Activated CD4-positive, alpha-beta memory T cell treated with anti-CD3 and anti-CD28 coated beads for 36 hours (primary cell): ENCODE measurements at regions of chr14 and their contacts with region 1.

Region 1: DNA sequence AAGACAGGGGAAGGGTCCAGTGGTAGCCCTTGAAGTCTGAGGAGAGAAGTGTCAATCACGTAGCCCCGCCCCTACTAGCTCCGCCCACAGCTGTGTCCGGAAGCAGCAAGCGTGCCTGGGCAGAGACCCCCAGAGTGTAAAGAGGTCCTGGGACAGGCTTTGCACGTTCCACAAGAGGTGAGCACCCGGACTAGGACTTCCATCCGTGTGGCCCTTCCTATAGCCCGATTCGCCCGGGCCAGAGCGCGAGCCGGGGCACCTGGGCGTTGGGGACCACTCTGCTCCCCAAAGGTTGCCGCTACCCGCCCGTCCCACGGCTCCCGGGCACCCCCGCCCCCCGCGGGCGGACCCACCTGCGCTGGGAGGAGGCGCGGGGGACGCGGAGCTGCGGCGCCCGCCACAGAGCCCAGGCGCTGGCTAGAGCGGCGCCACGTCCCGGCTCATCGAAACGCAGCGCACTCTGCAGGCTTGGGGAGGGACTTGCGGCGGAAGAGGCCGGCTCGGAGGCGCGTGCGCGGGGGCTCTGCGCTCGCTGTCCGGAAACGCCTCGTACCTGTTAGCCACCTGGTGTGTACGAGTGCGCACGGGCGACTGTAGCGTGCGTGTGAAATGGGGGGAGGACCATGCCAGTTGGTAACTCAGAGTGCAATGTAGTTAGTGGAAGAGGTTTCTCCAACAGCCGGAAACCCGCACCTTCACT is at the start of gene RABGGTA:
- DNase-seq: peak; percentile 93
- H3K4me3 Mint-ChIP-seq: peak within 1 kb of the TSS; percentile 84
- H3K27ac Mint-ChIP-seq: peak within 1 kb of the TSS; percentile 94
- H3K4me1 Mint-ChIP-seq: peaks cover 42% of the 10 kb centered on the region
- H3K27me3 Mint-ChIP-seq: no peaks in the 10 kb centered on the region
- total RNA-seq, gene RABGGTA: 39.5 to 40.6 TPM

Region 2: DNA sequence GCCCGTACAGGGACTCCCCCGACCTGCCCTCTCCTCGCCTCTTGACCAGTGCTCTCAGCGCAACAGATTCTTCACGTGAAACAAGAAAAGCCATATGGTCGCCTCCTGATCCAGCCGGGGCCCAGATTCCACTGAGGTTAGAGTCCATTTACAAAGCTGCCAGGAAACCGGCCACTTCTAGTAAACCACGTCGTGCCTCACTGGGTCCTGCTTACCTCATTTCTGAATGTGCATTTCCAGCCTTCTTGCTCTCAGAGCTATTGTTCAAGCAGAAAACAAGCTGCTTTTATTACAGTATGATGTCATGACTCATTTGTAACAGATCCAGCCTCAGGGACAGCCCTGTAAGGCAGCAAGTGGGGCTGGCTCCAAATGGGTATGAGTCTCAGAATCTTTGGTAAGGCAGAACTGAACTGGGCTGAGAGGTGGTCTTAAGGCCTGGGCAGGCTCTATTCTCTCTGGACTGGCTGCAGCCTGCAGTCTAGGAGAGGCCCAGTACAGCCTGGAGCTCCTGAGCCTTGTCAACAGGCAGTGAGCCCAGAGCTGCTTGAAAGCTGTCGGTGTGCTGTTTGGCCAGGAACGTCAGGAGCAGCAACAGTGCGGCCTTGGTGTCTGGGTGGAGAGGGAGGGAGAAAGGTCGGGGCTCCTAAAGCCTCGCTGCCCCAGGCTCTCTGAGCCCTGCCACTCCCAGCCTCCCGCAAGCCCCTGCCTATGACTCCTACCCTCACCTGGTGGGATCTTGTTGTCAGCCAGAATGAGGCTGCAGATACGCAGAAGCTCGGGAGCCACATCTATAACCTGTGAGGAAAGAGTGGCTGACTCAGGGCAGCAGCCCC is 91.1 kb before region 1 on chr14:
- CTCF ChIA-PET with region 1: no interaction called
- POLR2A ChIA-PET with region 1: no interaction called
- intact Hi-C with region 1: no loop called
- DNase-seq: no peak
- H3K4me3 Mint-ChIP-seq: no peak overlapping the region
- H3K27ac Mint-ChIP-seq: no peak overlapping the region
- H3K4me1 Mint-ChIP-seq: peaks cover 1% of the 10 kb centered on the region
- H3K27me3 Mint-ChIP-seq: no peaks in the 10 kb centered on the region

Region 3: DNA sequence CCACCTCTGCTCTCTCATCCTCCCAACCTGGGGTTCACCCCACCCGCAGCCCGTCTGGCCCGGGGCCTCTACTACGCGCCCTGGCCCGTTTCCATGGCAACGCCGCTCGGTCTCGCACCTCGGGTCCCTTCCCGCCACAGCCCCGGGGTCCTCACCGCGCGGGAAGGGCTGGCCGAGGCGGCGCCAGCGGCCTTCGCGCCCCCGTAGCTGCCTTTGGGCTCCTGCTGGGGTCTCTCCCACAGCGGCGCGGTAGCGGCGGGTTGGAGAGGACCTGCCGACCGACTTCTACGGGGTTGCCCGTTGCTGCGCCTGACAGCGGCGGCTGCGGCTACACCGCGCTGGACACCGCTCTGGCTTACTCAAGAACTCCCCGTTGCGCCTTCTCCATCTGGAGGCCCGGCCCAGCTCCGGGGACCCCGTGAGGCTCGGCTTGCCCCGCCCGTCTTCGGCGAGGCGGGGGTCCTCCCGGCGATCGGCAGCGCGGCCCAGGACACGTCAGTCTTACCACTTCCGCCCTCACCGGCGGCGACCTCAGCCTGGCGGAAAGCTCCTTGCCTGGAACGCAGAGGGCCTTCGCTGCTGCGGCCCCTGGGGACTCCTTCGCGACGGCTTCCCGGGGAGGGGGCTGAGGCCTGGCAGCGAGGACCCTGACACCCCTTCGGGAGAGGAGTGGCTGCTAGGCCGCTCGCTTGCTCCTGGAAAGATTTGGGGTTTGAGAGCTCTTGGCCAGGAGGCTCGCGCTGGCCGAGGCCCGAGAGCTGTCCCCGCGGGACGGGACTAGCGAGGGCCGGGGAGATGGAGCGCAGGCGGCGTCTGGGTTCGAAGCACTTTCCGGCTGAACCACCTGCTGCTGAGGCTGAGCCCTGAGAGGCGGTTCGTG is 75.9 kb before region 1 on chr14 and contains the start of gene TM9SF1:
- CTCF ChIA-PET with region 1: no interaction called
- POLR2A ChIA-PET with region 1: no interaction called
- intact Hi-C with region 1: no loop called
- DNase-seq: peak; percentile 91
- H3K4me3 Mint-ChIP-seq: peak within 1 kb of the TSS; percentile 96
- H3K27ac Mint-ChIP-seq: peak within 1 kb of the TSS; percentile 95
- H3K4me1 Mint-ChIP-seq: peaks cover 55% of the 10 kb centered on the region
- H3K27me3 Mint-ChIP-seq: no peaks in the 10 kb centered on the region
- total RNA-seq, gene TM9SF1: 23.7 to 26.7 TPM

Region 4: DNA sequence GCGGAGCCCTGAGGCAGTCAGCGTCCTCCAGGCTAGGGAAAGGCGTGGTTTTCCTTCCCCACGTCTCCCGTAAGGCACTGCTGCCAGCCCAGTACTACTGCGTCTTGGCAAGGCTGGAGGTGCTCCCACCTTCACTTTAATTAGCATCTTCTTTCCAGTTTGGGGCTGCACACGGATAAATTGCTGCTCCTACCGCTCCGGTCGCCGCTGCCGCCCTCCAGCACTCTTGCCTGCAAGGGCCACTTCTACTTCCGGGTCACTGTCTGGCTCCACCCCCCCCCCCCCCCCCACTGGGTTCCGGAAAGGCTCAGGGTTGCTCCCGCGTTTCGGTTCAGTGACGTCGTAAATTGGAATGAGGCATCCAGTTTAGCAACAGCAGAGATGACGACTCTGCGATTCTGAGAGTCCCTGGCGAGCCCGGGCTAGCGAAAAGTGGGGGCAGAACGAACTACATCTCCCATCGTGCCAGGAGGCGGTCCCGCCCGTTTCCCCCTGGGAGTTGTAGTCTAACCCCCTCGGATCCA is 39.1 kb before region 1 on chr14 and contains the start of gene NEDD8:
- CTCF ChIA-PET with region 1: interaction called, 3 read pairs
- POLR2A ChIA-PET with region 1: interaction called, 4 read pairs
- intact Hi-C with region 1: loop called (anchors 1 kb)
- DNase-seq: peak; percentile 96
- H3K4me3 Mint-ChIP-seq: peak within 1 kb of the TSS; percentile 93
- H3K27ac Mint-ChIP-seq: peak within 1 kb of the TSS; percentile 90
- H3K4me1 Mint-ChIP-seq: peaks cover 55% of the 10 kb centered on the region
- H3K27me3 Mint-ChIP-seq: no peaks in the 10 kb centered on the region
- total RNA-seq, gene NEDD8: 202 to 213 TPM

Region 5: GRCh38 chr14:24251880-24252288 is 19.4 kb before region 1 on chr14:
- CTCF ChIA-PET with region 1: interaction called, 23 read pairs
- POLR2A ChIA-PET with region 1: interaction called, 8 read pairs
- intact Hi-C with region 1: loop called (anchors 1 kb)
- DNase-seq: no peak
- H3K4me3 Mint-ChIP-seq: no peak overlapping the region
- H3K27ac Mint-ChIP-seq: no peak overlapping the region
- H3K4me1 Mint-ChIP-seq: peaks cover 28% of the 10 kb centered on the region
- H3K27me3 Mint-ChIP-seq: no peaks in the 10 kb centered on the region

Region 6: DNA sequence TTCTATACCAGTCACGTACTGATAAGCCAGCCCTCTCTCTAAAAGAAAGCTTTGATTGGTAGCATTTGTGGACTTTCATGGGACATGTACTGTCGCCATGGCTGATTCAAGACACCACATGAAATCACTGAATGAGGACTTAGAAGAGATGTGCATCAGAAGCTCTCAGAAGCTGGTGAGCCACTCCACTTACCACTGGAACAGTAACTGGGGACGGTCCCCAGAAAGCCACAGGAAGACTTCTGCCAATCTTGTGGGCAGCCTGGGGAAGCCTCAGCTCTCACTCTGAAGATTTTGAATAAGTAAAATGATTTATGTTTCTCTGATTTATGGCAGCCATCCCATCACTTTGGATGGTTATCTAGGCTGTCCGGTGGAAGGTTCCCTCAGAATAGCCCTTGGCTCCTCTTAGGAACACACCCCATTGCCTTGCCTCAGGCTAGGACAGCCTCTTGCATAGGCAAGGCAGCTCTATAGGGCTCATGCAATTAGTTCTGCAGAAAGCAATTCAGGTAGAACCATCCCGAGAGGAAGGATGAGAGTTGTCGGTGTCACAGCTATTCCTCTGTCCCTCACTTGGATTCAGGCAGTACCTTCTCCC is 18.5 kb after region 1 on chr14:
- CTCF ChIA-PET with region 1: interaction called, 18 read pairs
- POLR2A ChIA-PET with region 1: interaction called, 15 read pairs
- intact Hi-C with region 1: loop called (anchors 1 kb)
- DNase-seq: peak; percentile 90
- H3K4me3 Mint-ChIP-seq: no peak overlapping the region
- H3K27ac Mint-ChIP-seq: peak overlapping the region; percentile 8
- H3K4me1 Mint-ChIP-seq: peaks cover 25% of the 10 kb centered on the region
- H3K27me3 Mint-ChIP-seq: peaks cover 2% of the 10 kb centered on the region

Region 7: DNA sequence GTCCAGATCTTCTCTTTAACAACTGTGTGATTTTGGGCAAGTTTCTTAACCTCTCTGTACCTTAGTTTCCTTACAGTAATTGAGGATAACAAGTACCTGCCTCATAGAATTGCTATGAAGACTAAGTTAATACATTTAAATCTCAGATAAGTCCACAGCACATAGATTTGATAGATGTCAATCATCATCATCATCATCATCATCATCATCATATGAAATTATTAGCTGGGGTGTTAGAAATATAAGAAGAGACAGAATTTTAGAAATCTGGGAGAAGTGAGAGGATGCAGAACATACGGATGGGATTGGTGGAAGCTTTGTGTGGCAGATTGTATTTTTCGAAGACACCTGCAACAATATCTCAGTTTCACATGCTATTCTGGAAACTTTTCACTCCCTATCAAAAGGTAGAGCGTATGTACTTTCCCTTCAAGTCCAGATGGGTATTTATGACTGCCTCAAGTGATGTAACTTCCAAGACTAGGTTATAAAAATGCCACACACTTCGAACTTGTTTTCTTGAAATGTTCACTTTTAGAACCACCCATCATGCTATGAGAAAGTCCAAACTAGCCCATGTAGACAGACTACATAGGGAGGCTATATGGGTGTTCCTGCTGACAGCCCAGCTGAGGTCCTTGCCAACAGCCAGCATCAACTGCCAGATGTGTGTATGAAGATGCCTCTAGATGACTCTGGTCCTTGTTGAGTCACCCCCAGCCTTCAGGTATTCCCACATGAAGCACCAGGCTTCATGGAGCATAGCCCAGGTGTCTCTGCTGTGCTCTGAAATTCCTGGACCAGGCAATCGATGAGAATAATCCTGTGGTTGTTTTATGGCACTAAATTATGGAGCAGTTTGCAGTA is 192.0 kb after region 1 on chr14:
- CTCF ChIA-PET with region 1: no interaction called
- POLR2A ChIA-PET with region 1: no interaction called
- intact Hi-C with region 1: no loop called
- DNase-seq: no peak
- H3K4me3 Mint-ChIP-seq: no peak overlapping the region
- H3K27ac Mint-ChIP-seq: no peak overlapping the region
- H3K4me1 Mint-ChIP-seq: peaks cover 25% of the 10 kb centered on the region
- H3K27me3 Mint-ChIP-seq: no peaks in the 10 kb centered on the region